K562 (cell line): ENCODE measurements at regions of chr12 and their contacts with region 1.

Region 1: DNA sequence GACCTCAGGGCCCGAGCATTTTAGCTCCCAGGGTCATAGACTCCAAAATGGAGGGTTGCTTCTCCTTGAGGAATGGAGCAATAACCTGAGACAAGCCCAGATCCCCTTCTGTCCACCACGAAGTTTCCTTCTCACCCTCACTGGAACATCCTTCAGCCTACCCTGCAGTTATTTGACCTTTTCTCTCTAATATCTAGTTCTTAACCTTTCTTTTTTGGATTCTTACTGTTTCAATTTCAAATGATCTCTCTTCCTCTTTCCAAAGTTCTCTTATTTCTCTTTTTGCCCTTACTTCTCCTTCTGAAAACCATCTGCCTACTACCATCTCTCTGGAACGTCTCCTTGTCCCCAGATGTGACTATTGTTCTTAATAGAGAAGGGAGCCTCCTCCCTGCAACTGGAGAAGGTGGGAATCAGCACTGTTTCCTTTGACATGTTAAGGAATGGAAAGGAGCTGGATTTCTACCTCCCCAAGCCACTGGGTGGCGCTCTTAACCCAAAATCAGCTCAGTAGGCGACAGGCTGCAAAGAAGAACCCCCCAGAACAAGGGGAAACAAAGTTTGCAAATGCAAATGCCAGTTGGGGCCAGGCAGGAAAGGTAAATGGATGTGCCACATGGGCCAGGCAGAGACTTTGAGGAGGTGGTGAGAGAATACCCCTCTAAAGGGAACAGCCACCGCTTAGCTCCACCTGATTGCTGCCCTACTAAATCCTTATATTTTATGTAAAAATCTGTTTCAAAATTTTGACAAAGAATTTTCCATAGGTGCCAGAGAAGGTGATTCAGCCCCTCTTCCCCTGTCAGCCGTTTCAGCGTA is 22.4 kb upstream of the PDE1B start:
- DNase-seq: peak; percentile 59 to 76 (median 72)
- ATAC-seq: peak; percentile 96
- H3K4me3 ChIP-seq: no peak overlapping the region
- H3K27ac ChIP-seq: no peak overlapping the region
- H3K4me1 ChIP-seq: 0 out of 5 replicates have a peak, but pooled peaks cover 0 to under 1% of the 10 kb centered on the region in 2 experiments
- H3K27me3 ChIP-seq: no peaks in the 10 kb centered on the region
- CTCF ChIP-seq: peak; percentile 80 to 91 (median 90)
- EP300 ChIP-seq: no peak
- POLR2A ChIP-seq: no peak
- RAD21 ChIP-seq: peak; percentile 56 to 73

Region 2: DNA sequence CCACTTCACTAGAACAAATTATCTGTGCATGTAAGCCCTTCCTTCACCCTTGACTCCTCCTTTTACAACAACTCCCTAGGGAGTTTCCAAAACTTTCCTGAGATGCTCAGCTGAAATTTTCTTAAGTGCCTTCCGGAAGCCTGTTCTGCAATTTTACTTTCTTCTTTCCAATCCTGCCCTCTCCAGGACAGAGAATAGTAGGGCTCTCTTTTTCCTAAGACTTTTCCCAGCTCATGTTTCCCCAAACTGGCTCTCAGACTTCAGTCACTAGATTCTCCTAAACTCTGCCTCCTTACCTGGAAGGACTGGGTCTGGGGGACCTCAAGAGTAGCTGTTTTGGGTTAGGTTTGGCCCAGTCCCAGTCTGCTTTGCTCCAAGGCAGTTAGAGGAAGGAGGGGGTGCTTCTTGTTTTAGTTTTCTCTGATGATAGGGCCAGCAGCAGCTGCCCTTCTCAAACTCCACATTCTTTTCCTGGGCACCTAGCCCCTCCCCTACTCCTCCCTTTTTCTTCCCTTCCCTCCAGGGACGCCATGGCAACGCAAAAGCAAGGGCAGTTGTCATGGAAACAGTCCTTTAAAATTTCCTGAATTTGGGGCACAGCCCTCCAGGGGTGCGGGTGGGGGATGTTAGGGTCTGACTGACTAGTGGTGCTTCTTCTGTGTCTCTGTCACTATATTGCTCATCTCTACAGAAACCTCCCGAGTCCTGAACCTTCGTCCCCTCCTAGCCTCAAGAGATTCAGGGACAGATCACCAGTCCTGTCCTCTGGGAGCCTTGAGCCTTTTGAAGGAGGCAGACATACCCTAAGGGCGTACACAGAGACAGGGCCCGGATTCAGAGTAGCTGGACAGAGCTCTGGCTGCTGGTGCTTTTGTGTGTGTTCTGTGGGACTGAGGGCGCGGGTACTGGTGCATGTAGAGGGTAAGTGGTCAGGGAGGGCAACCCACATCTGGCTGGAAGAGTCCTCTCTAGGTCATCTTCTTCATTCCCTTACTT is 44.5 kb after region 1 on chr12:
- CTCF ChIA-PET with region 1: interaction called, 10 read pairs
- POLR2A ChIA-PET with region 1: no interaction called
- in situ Hi-C with region 1: no loop called
- intact Hi-C with region 1: no loop called
- DNase-seq: no peak
- ATAC-seq: no peak
- H3K4me3 ChIP-seq: no peak overlapping the region
- H3K27ac ChIP-seq: no peak overlapping the region
- H3K4me1 ChIP-seq: peaks cover 0 to 3% of the 10 kb centered on the region in 2 experiments; a peak in 3 of 5 replicates
- H3K27me3 ChIP-seq: peaks cover 26 to 60% of the 10 kb centered on the region in 2 experiments
- CTCF ChIP-seq: peak in 1 of 3 experiments; percentile 44; a peak in 2 of 6 replicates
- EP300 ChIP-seq: no peak
- POLR2A ChIP-seq: no peak
- RAD21 ChIP-seq: peak in 1 of 2 experiments; percentile 27; a peak in 1 of 4 replicates

Region 3: GRCh38 chr12:54579696-54580333 is 52.8 kb after region 1 on chr12:
- CTCF ChIA-PET with region 1: no interaction called
- POLR2A ChIA-PET with region 1: no interaction called
- in situ Hi-C with region 1: no loop called
- intact Hi-C with region 1: loop called (anchors 1 kb)
- DNase-seq: peak; percentile 84 to 86 (median 84)
- ATAC-seq: peak; percentile 99
- H3K4me3 ChIP-seq: no peak overlapping the region
- H3K27ac ChIP-seq: no peak overlapping the region
- H3K4me1 ChIP-seq: no peaks in the 10 kb centered on the region; a peak in 1 of 5 replicates
- H3K27me3 ChIP-seq: peaks cover 13 to 49% of the 10 kb centered on the region in 2 experiments
- CTCF ChIP-seq: peak; percentile 93 to 99 (median 96)
- EP300 ChIP-seq: no peak
- POLR2A ChIP-seq: no peak
- RAD21 ChIP-seq: peak; percentile 67 to 83